OCI-LY7 (cell line): ENCODE measurements at regions of chr13 and their contacts with region 1.

Region 1: DNA sequence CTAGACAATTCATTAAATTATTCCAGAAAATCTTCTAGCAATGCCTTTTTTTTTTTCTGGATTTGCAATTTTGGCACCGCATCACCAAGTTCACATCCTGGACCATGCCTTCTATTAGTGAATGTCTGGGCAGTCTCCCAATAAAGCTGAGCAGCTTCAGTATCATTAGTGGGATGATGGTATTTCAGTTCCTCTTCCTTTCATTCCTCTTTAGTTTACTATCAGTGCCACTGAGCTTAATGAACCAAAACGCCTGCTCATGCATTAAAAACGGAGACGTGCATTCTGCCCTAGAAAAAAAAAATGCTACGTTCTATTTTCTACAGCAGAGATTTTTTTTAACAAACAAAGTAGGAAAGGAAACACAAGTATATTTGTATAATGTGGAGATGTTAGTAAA is 343.0 kb downstream of the PCDH9 start:
- DNase-seq: peak; percentile 89
- H3K4me3 ChIP-seq: peak overlapping the region; percentile 50
- H3K27ac ChIP-seq: peak overlapping the region; percentile 99
- H3K4me1 ChIP-seq: peaks cover 67% of the 10 kb centered on the region
- CTCF ChIP-seq: no peak

Region 2: GRCh38 chr13:66794340-66795031 is 92.6 kb before region 1 on chr13:
- CTCF ChIA-PET with region 1: no interaction called
- POLR2A ChIA-PET with region 1: interaction called, 7 read pairs
- intact Hi-C with region 1: loop called (anchors 1 kb)
- DNase-seq: peak; percentile 92
- H3K4me3 ChIP-seq: peak overlapping the region; percentile 39
- H3K27ac ChIP-seq: peak overlapping the region; percentile 94
- H3K4me1 ChIP-seq: peaks cover 35% of the 10 kb centered on the region
- CTCF ChIP-seq: no peak

Region 3: DNA sequence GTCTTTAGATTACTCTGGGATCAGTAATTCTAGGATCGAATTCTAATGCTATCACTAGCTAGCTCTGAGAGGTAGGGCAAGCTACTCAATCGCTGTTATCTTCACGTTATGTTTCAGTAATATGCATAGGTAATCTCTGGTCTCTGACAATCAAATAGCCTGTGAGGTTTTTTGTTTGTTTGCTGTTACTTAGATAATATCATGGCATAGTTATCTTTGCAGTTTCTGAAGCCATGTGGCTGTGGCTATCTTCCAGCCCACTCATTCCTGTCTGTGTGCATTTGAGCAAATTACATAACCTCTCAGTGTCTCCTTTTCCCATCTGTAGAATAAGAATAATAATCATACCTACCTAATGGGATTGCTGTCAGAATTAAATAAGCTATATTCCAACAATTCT is 12.9 kb after region 1 on chr13:
- CTCF ChIA-PET with region 1: interaction called, 3 read pairs
- POLR2A ChIA-PET with region 1: interaction called, 28 read pairs
- intact Hi-C with region 1: no loop called
- DNase-seq: no peak
- H3K4me3 ChIP-seq: no peak overlapping the region
- H3K27ac ChIP-seq: no peak overlapping the region
- H3K4me1 ChIP-seq: peaks cover 7% of the 10 kb centered on the region
- CTCF ChIP-seq: no peak

Region 4: GRCh38 chr13:66926851-66927524 is 39.9 kb after region 1 on chr13:
- CTCF ChIA-PET with region 1: no interaction called
- POLR2A ChIA-PET with region 1: interaction called, 15 read pairs
- intact Hi-C with region 1: no loop called
- DNase-seq: no peak
- H3K4me3 ChIP-seq: no peak overlapping the region
- H3K27ac ChIP-seq: no peak overlapping the region
- H3K4me1 ChIP-seq: peaks cover 11% of the 10 kb centered on the region
- CTCF ChIP-seq: no peak

Region 5: DNA sequence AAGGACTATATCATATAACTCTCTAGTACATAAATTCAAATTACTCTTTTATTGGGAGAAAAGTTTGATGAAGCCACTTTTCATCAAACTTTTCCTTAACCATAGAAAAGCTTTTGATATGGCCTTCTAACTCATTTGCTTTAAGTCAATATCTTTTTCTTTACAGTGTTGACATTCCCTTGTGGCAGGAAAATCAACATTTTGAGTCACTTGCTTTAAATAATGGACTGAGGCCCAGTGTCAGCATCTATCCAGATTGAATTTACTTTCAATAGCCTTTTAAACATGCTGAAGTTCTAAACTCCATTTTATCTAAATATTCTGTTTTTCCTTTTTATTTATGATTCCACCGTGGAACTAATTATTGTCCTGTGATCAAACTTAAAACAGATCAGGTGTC is 280.3 kb after region 1 on chr13:
- CTCF ChIA-PET with region 1: no interaction called
- POLR2A ChIA-PET with region 1: no interaction called
- intact Hi-C with region 1: no loop called
- DNase-seq: no peak
- H3K4me3 ChIP-seq: no peak overlapping the region
- H3K27ac ChIP-seq: no peak overlapping the region
- H3K4me1 ChIP-seq: no peaks in the 10 kb centered on the region
- CTCF ChIP-seq: no peak

Region 6: DNA sequence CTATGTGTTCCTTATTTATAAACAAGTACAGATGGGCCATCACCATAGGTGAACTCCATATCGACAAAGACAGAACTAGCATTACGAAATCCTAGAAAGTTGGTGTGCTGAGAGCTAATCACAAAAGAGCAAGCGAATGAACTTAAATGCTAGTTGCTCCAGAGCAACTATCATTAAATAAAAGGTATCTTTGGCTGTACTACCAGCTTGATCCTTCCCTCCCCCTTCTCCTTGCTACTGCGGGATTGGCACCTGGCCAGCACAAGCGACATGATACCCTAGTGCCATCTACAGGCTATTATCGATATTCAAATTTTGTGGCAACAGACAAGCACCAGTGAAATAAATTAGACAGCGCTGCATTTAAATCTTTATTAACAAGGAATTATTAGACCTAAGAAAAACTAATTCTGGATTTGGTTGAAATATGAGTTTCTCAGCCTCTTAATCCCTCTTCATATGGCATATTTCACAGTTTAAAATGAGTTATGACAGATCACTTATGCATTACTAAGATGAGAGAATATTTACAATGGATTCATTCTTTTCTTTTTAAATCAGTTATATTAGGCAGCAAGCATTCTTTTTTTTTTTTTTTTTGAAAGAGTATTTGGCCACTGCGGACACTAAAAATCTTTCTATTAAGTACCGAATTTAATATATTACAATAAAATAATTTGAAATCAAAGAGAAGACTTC is 337.2 kb after region 1 on chr13:
- CTCF ChIA-PET with region 1: no interaction called
- POLR2A ChIA-PET with region 1: interaction called, 7 read pairs
- intact Hi-C with region 1: loop called (anchors 2 kb)
- DNase-seq: peak; percentile 86
- H3K4me3 ChIP-seq: peak overlapping the region; percentile 62
- H3K27ac ChIP-seq: peak overlapping the region; percentile 48
- H3K4me1 ChIP-seq: peaks cover 56% of the 10 kb centered on the region
- CTCF ChIP-seq: peak; percentile 87